ENCODE measurements at regions of chr2 and their contacts with region 1.

Region 1: DNA sequence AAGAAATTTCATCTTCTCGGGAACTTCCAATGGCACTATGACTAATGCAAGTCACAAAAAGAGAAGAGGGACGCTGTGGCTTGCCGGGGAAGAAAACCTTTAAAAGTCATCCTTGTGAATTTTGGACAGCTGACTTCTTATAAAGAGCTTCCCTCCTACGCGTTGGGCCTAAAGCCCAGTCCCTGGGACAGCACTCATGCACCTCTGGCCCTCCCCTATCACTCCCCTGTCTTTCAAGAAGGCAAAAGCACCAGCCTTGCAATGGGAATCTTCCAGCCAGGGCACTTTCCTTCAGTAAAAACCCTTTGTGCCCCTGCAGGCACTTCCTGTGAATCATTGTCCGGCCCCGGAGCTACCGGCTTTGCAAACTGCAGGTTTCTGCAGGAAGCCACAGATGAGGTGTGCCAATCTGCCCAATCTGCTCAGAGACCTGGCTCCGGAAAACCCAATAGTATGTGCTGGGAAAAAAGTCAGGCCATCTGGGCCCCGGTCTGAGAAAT is 7.1 kb downstream of the MREG start:
- DNase-seq: peak; percentile 50
- ATAC-seq: peak; percentile 81
- H3K4me3 Mint-ChIP-seq: peak overlapping the region; percentile 8; the same call in 1 of the 2 replicates
- H3K27ac Mint-ChIP-seq: peak overlapping the region; percentile 63
- H3K4me1 Mint-ChIP-seq: peaks cover 56% of the 10 kb centered on the region
- H3K27me3 Mint-ChIP-seq: no peaks in the 10 kb centered on the region
- CTCF ChIP-seq: no peak

Region 2: DNA sequence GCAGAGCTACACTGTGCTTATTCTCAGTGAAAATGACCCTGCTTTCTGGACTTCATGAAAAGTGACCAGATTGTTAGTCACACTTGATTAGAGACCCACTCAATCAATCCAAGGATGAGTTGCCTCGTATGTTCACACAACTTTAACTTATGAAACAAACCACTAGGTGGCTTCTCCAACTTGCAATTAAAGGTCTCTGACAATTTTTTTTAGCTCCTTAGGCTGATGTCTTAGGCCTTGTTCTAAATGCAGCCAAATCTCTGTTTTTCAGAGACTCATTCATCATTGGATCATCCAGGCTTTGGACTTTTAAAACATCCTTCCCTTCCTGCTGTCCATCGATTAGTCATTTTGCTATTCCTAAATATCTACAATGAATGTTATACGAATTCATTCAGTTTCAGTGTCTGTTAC is 56.2 kb before region 1 on chr2:
- CTCF ChIA-PET with region 1: interaction called, 12 read pairs
- POLR2A ChIA-PET with region 1: no interaction called
- DNase-seq: no peak
- ATAC-seq: peak; percentile 81
- H3K4me3 Mint-ChIP-seq: no peak overlapping the region
- H3K27ac Mint-ChIP-seq: no peak overlapping the region
- H3K4me1 Mint-ChIP-seq: peaks cover 7% of the 10 kb centered on the region
- H3K27me3 Mint-ChIP-seq: no peaks in the 10 kb centered on the region
- CTCF ChIP-seq: no peak

Region 3: GRCh38 chr2:216044883-216045486 is 38.8 kb after region 1 on chr2:
- CTCF ChIA-PET with region 1: no interaction called
- POLR2A ChIA-PET with region 1: interaction called, 10 read pairs
- DNase-seq: no peak
- ATAC-seq: no peak
- H3K4me3 Mint-ChIP-seq: no peak overlapping the region
- H3K27ac Mint-ChIP-seq: no peak overlapping the region
- H3K4me1 Mint-ChIP-seq: no peaks in the 10 kb centered on the region
- H3K27me3 Mint-ChIP-seq: no peaks in the 10 kb centered on the region
- CTCF ChIP-seq: no peak

Measured in WTC11 (cell line).